CD4-positive, alpha-beta T cell (primary cell): ENCODE measurements at regions of chr11 and their contacts with region 1.

Region 1: DNA sequence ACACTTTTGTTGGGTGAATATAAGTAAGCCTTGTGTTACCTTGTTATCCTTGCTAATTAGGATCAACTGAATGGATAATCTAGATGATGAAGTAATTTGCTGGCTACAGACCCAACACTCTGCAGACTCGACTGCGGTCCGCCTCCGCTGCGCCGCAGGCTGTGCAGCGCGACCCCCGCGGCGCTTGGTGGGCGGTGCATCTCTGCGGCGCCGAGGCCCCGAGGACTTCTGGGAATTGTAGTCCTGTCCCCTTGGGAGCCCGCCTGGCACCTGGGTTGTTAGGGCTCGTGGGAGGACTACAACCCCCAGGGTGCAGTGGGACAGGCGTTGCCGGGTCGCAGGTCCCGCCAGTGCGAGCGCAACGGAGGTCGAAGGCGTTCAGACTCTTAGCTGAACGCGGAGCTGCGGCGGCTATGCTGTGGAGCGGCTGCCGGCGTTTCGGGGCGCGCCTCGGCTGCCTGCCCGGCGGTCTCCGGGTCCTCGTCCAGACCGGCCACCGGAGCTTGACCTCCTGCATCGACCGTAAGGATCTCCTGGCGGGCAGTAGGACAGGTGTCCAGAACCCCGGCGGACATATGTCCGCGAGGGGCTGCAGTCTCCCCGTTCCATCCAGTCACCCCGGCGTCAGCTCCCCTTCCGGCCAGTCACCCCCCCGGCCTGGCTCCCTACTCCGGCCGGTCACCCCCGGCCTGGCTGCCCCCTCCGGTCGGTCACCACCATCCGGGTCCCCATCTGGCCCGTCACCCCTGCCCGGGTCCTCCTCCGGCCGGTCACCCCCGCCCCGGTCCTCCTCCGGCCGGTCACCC is at the starts of genes ACAD8 and THYN1:
- DNase-seq: peak; percentile 90 to 98 (median 94)
- ATAC-seq: peak; percentile 99
- H3K4me3 ChIP-seq: peak within 1 kb of the TSS; percentile 84
- H3K4me3 Mint-ChIP-seq: peak within 1 kb of the TSS; percentile 94
- H3K27ac ChIP-seq: peak within 1 kb of the TSS in 1 of 2 donors; percentile 51
- H3K27ac Mint-ChIP-seq: peak within 1 kb of the TSS; percentile 69
- H3K4me1 ChIP-seq: peaks cover 19% of the 10 kb centered on the region
- H3K4me1 Mint-ChIP-seq: peaks cover 40% of the 10 kb centered on the region
- H3K27me3 ChIP-seq: no peaks in the 10 kb centered on the region
- H3K27me3 Mint-ChIP-seq: no peaks in the 10 kb centered on the region
- CTCF ChIP-seq: peak; percentile 36
- total RNA-seq, gene ACAD8: 15.0 to 16.3 TPM
- total RNA-seq, gene THYN1: 25.7 to 26.0 TPM

Region 2: GRCh38 chr11:134236834-134237556 is 16.4 kb before region 1 on chr11:
- CTCF ChIA-PET with region 1: no interaction called
- POLR2A ChIA-PET with region 1: no interaction called
- intact Hi-C with region 1: no loop called
- DNase-seq: no peak
- ATAC-seq: no peak
- H3K4me3 ChIP-seq: no peak overlapping the region
- H3K4me3 Mint-ChIP-seq: no peak overlapping the region
- H3K27ac ChIP-seq: no peak overlapping the region
- H3K27ac Mint-ChIP-seq: peak overlapping the region; percentile 34
- H3K4me1 ChIP-seq: peaks cover 7% of the 10 kb centered on the region
- H3K4me1 Mint-ChIP-seq: peaks cover 10% of the 10 kb centered on the region
- H3K27me3 ChIP-seq: no peaks in the 10 kb centered on the region
- H3K27me3 Mint-ChIP-seq: no peaks in the 10 kb centered on the region
- CTCF ChIP-seq: no peak

Region 3: DNA sequence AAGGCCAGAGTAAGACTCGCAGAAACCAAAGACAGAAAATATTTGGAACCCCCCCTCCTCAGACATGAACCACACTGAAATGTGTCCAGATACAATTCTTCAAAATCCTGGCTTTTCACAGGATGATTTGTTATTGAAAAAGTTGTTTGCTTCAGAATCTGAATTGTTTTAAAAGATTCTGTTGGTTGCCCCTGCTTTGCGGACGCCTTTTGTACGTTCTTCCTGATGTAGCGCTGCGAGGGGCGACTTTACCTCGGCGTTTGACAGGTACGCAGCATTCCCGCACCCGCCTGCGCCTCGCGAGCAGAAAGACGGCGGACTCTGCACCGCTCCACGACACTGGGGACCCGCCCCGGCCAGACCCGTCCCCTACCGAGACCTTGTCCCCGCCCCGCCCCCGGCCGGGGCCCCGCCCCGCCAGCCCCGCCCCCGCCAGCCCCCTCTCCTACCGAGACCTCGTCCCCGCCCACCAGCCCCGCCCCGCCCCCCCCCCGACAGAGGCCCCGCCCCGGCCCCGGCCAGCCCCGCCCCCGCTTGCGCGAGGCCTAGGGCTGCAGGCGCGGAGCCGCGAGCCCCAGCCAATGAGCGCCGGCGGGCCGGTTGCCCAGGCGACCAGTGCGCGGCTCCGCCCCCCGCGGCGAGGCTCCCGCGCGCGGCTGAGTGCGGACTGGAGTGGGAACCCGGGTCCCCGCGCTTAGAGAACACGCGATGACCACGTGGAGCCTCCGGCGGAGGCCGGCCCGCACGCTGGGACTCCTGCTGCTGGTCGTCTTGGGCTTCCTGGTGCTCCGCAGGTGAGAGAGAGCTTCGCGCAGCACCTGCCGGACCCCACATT is 78.2 kb after region 1 on chr11 and contains the start of gene GLB1L2:
- CTCF ChIA-PET with region 1: no interaction called
- POLR2A ChIA-PET with region 1: no interaction called
- intact Hi-C with region 1: loop called in 1 of 2 experiments (anchors 1 kb)
- DNase-seq: peak; percentile 65 to 93 (median 77)
- ATAC-seq: peak; percentile 91
- H3K4me3 ChIP-seq: peak within 1 kb of the TSS; percentile 80
- H3K4me3 Mint-ChIP-seq: peak within 1 kb of the TSS; percentile 93
- H3K27ac ChIP-seq: no peak within 1 kb of the TSS
- H3K27ac Mint-ChIP-seq: no peak within 1 kb of the TSS
- H3K4me1 ChIP-seq: peaks cover 22% of the 10 kb centered on the region
- H3K4me1 Mint-ChIP-seq: peaks cover 19% of the 10 kb centered on the region
- H3K27me3 ChIP-seq: peaks cover 0 to 4% of the 10 kb centered on the region in 2 experiments
- H3K27me3 Mint-ChIP-seq: peaks cover 36% of the 10 kb centered on the region
- CTCF ChIP-seq: no peak
- total RNA-seq, gene GLB1L2: 0.59 to 0.63 TPM